ENCODE measurements at regions of chr4 and their contacts with region 1.

Region 1: DNA sequence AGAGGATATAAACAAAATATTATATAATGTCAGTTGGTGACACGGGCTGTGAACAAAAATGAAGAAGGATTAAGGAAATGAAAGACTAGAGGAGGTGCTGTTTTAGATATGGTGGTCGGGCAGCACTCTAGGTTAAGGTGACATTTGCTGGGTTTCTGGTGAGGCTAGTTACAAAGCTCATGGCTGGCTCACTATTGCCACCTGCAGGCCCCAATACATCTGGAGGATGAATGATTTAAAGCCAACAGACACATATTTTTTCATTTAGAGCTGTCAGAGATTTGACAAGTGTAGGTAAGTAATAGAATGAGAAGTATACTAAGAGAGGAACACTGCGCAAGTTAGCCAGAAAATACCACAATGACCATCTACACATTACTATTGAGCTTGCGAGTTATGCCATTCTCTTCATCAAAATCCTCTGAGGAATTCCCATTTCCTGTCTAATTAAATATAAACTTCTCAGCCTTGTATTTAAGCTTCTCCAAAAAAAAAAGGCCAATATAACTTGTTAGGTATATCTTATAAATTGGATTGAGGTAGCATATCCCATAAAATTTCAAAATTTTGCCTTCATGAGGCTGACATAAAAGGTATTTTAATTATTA is 6.4 kb upstream of the FGG start:
- DNase-seq: peak; percentile 77
- H3K4me3 Mint-ChIP-seq: no peak overlapping the region
- H3K27ac Mint-ChIP-seq: no peak overlapping the region
- H3K4me1 Mint-ChIP-seq: no peaks in the 10 kb centered on the region
- H3K27me3 Mint-ChIP-seq: no peaks in the 10 kb centered on the region
- CTCF ChIP-seq: peak; percentile 76

Region 2: DNA sequence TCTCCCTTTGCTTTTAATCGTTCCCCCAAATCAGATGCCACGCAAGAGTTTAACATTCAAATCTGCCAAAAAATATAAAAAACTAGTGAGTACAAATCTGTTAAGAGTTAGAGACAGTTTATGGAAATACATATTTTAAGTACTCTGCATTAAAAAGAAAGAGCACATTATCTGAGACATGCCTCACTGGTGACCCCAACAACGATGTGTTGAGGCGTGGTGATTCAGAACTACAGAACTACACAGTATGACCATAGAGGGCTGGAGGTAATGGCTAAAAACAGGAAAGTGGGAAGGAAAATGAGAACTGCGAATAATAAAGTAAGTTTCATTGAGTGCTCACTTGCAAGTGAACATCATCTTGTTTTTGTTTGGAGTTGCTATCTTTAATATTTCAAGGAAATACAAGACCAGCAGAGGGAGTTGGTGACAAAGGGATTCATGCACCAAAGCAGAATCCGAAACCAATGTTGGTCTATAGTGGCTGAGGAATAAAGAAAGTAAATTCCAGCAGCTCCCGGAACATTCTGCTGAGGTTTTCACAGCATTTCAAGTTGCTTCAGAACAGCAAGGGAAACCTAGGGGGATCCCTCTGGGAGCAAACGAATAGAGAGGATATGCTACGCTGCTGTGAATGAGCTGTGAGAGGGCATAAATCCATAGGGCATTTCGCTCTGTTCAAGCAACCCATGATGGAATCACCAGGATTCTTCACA is 219.4 kb before region 1 on chr4:
- CTCF ChIA-PET with region 1: no interaction called
- POLR2A ChIA-PET with region 1: no interaction called
- intact Hi-C with region 1: loop called (anchors 5 kb)
- DNase-seq: peak; percentile 54
- H3K4me3 Mint-ChIP-seq: no peak overlapping the region
- H3K27ac Mint-ChIP-seq: no peak overlapping the region
- H3K4me1 Mint-ChIP-seq: peaks cover 9% of the 10 kb centered on the region
- H3K27me3 Mint-ChIP-seq: no peaks in the 10 kb centered on the region
- CTCF ChIP-seq: peak; percentile 46

Region 3: GRCh38 chr4:154559494-154560418 is 59.1 kb before region 1 on chr4:
- CTCF ChIA-PET with region 1: interaction called, 935 read pairs
- POLR2A ChIA-PET with region 1: interaction called, 10 read pairs
- intact Hi-C with region 1: loop called (anchors 1 kb)
- DNase-seq: peak; percentile 77
- H3K4me3 Mint-ChIP-seq: no peak overlapping the region
- H3K27ac Mint-ChIP-seq: no peak overlapping the region
- H3K4me1 Mint-ChIP-seq: peaks cover 18% of the 10 kb centered on the region
- H3K27me3 Mint-ChIP-seq: no peaks in the 10 kb centered on the region
- CTCF ChIP-seq: peak; percentile 78

Region 4: DNA sequence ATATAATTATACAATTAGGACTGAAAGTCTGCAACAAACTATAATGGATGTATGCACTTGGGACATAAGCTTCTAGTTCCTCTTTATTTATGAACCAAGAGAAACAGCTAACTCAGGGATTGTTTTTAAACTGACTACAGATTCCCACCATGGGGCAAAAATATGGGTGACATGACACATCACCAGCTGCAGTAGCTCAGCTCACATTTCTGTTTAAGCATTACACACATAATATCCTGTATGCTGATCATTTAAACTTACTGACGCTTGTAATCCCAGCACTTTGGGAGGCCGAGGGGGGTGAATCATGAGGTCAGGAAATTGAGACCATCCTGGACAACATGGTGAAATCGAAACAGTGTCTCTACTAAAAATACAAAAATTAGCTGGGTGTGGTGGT is 44.5 kb before region 1 on chr4:
- CTCF ChIA-PET with region 1: interaction called, 59 read pairs
- POLR2A ChIA-PET with region 1: no interaction called
- intact Hi-C with region 1: no loop called
- DNase-seq: no peak
- H3K4me3 Mint-ChIP-seq: no peak overlapping the region
- H3K27ac Mint-ChIP-seq: no peak overlapping the region
- H3K4me1 Mint-ChIP-seq: peaks cover under 1% of the 10 kb centered on the region
- H3K27me3 Mint-ChIP-seq: no peaks in the 10 kb centered on the region
- CTCF ChIP-seq: no peak

Region 5: GRCh38 chr4:154602404-154603020 is 16.3 kb before region 1 on chr4:
- CTCF ChIA-PET with region 1: interaction called, 20 read pairs
- POLR2A ChIA-PET with region 1: interaction called, 3 read pairs
- intact Hi-C with region 1: no loop called
- DNase-seq: peak; percentile 60
- H3K4me3 Mint-ChIP-seq: no peak overlapping the region
- H3K27ac Mint-ChIP-seq: no peak overlapping the region
- H3K4me1 Mint-ChIP-seq: peaks cover 7% of the 10 kb centered on the region
- H3K27me3 Mint-ChIP-seq: no peaks in the 10 kb centered on the region
- CTCF ChIP-seq: no peak

Region 6: DNA sequence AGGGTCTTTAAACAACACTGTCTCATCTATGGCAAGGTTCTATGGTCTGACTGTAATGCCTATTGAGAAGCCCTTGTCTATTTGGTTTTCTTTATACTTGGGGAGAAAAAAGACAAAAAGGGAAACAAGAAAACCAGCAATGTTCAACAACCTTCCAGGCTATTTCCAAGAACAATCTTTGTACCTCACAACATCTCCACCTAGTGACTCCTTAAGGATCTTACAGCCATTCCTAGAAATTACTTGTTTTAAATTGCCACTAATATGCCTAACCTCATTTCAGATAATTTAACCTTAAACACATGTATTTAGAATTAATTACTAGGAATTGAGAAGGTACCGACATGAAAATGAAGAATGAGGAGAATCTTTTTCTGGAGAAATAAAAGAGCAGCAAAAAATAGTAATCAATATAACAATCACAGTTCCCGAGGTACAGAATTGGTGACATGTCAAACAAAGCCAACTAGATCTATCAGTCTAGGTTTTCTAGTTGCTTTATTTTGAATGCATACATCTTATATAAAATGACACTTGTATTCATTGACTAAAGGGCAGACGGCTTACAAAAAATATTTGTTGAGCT is 160.6 kb after region 1 on chr4:
- CTCF ChIA-PET with region 1: interaction called, 23 read pairs
- POLR2A ChIA-PET with region 1: no interaction called
- intact Hi-C with region 1: no loop called
- DNase-seq: peak; percentile 57
- H3K4me3 Mint-ChIP-seq: no peak overlapping the region
- H3K27ac Mint-ChIP-seq: no peak overlapping the region
- H3K4me1 Mint-ChIP-seq: no peaks in the 10 kb centered on the region
- H3K27me3 Mint-ChIP-seq: no peaks in the 10 kb centered on the region
- CTCF ChIP-seq: peak; percentile 67